CD4-positive, alpha-beta T cell (primary cell): ENCODE measurements at regions of chr17 and their contacts with region 1.

Region 1: DNA sequence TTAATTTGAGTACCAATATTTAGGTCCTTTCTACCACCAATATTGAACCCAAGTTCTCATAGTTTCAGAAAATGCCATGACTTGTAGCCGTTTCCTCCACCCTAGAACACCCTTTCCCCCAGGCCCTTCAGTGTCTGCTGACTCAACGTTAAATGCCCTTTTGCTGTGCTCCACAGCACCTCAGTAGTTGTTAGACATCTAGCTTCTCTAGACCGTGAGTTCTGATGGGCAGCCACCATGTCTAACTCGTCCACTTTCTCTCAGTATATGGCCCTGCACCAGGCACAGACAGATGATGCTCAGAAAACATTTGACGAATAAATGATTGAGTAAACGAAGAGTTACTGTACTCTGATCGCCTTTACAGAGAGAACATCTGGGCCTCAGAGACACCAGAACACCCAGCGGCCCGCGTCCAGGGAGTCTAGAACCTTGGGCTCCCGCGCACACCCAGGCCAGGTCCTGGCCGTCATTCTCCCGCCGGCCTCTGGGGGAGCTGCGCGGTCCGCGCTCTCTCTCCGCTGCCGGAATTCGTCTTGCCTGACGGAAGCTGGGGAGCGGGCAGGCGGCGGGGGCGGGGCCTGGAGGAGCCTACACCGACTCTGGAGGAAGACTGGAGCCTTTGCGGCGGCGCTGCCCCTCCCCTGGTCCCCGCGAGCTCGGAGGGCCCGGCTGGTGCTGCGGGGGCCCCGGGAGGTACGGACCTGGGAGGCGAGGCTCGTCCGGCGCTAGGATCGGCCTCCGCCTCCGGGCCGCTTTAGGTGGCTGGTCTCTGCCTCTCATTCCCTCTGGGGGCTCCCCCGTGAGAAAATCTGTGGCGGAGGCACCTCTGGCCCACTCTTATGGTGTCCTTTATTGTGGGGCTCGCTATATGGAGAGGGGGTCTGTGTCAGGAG is at the start of gene NKIRAS2:
- DNase-seq: peak; percentile 88 to 95 (median 92)
- ATAC-seq: peak; percentile 78
- H3K4me3 ChIP-seq: peak within 1 kb of the TSS; percentile 93
- H3K4me3 Mint-ChIP-seq: peak within 1 kb of the TSS; percentile 100
- H3K27ac ChIP-seq: peak within 1 kb of the TSS; percentile 64 to 80
- H3K27ac Mint-ChIP-seq: peak within 1 kb of the TSS; percentile 98
- H3K4me1 ChIP-seq: peaks cover 56% of the 10 kb centered on the region
- H3K4me1 Mint-ChIP-seq: peaks cover 66% of the 10 kb centered on the region
- H3K27me3 ChIP-seq: no peaks in the 10 kb centered on the region
- H3K27me3 Mint-ChIP-seq: no peaks in the 10 kb centered on the region
- CTCF ChIP-seq: peak; percentile 94
- total RNA-seq, gene NKIRAS2: 12.5 to 12.9 TPM

Region 2: DNA sequence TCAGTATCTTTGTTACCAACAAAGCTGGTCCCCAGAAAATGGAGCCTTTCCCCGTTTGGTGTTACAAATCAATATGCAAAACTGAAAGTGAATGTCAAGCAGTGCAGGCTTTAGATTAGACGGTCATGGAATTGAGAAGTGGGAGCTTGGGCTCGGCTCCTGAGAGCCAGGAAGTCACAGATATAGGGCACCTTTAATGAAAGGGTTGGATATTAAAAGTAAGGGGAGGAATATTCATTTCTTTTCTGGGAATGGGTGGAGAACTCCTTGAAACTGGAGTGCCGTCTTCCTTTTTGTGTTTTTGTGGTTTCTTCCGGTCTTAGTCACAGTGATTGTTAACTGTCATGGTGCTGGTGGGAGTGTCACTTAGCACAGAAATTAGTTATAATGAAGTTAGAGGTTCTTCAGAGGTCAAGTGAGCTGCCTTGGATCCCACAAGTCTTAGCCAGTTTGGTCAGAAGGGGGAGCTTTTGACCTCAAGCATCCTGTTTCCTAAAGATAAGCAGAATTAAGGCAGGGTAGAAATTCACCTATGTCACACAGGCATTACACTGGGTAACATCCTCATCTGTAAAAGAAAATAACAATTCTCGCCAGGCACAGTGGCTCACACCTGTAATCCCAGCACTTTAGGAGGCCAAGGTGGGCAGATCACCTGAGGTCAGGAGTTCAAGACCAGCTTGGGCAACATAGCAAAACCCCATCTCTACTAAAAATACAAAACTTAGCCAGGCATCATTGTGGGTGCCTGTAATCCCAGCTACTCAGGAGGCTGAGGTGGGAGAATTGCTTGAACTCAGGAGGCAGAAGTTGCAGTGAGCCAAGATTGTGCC is 340.6 kb before region 1 on chr17:
- CTCF ChIA-PET with region 1: no interaction called
- POLR2A ChIA-PET with region 1: no interaction called
- intact Hi-C with region 1: no loop called
- DNase-seq: peak in 12 of 14 experiments; percentile 18 to 94 (median 54)
- ATAC-seq: peak; percentile 91
- H3K4me3 ChIP-seq: peak overlapping the region; percentile 38
- H3K4me3 Mint-ChIP-seq: peak overlapping the region; percentile 83
- H3K27ac ChIP-seq: peak overlapping the region; percentile 73 to 74
- H3K27ac Mint-ChIP-seq: peak overlapping the region; percentile 87
- H3K4me1 ChIP-seq: peaks cover 40% of the 10 kb centered on the region
- H3K4me1 Mint-ChIP-seq: peaks cover 20% of the 10 kb centered on the region
- H3K27me3 ChIP-seq: no peaks in the 10 kb centered on the region
- H3K27me3 Mint-ChIP-seq: no peaks in the 10 kb centered on the region
- CTCF ChIP-seq: peak; percentile 28

Region 3: DNA sequence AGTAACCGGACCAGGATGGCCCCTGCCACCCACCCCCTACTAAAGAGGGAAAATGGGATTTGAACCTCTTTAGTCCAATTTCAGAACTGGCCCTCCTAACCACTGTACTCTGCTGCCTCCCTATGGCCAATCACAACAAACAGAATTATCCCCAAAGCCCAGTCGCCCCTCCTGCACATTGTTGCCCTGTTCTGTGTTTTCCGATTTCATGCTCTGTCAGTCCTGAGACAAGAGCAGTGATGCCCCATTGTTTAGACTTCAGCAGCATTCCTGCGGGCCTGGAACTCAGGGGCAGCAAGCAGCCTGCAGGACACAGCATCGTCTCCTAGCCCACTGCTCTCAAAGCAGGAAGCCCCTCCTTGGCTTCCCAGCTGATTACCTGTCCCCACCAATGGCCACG is 134.0 kb before region 1 on chr17:
- CTCF ChIA-PET with region 1: no interaction called
- POLR2A ChIA-PET with region 1: no interaction called
- intact Hi-C with region 1: no loop called
- DNase-seq: peak in 2 of 14 experiments; percentile 16 to 25
- ATAC-seq: no peak
- H3K4me3 ChIP-seq: no peak overlapping the region
- H3K4me3 Mint-ChIP-seq: no peak overlapping the region
- H3K27ac ChIP-seq: no peak overlapping the region
- H3K27ac Mint-ChIP-seq: no peak overlapping the region
- H3K4me1 ChIP-seq: no peaks in the 10 kb centered on the region
- H3K4me1 Mint-ChIP-seq: no peaks in the 10 kb centered on the region
- H3K27me3 ChIP-seq: no peaks in the 10 kb centered on the region
- H3K27me3 Mint-ChIP-seq: no peaks in the 10 kb centered on the region
- CTCF ChIP-seq: peak; percentile 20

Region 4: DNA sequence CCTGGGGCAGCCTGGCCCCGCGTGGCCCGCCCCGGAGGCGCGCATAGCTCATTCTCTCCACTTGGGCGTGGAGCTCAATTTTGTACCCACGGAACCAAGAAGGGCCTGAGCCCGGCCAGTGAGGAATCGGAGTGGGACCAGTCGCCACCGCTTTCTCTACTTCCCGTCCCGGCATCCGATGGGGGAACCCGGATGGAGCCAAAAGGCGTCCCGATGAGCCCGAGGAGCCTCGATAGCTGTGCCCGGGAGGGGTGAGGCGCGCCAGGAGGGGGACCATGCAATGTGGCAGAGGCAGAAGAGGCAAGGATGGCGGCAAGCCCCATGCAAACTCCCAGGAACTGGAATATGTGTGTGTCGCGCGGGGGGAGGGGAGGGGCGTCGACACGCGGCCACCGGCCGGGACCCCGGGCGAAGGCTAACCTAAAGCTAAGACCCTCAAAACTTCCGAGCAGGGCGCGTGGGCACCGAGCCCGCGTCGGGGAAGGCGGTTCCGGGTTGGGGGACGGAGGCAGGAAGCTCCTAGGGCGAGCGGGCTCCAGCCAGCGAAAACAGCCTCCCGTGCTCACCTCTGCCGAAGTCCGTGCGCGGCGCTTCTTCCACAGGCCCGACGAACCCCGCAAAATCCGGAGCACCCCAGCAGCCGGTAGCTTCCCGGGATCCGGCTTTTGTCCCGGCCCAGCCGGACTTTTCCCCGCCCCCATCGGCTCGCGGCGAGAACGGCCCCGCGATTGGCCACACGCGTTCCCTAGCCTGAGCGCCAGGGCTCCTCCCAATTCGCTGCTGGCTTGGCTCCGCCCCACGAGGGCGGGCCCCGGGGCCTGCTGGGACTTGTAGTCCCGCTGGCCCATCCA is 101.2 kb before region 1 on chr17 and contains the start of gene ACLY:
- CTCF ChIA-PET with region 1: no interaction called
- POLR2A ChIA-PET with region 1: interaction called, 9 read pairs
- intact Hi-C with region 1: loop called in 1 of 2 experiments (anchors 5 kb)
- DNase-seq: peak; percentile 87 to 98 (median 94)
- ATAC-seq: peak; percentile 99
- H3K4me3 ChIP-seq: peak within 1 kb of the TSS; percentile 90
- H3K4me3 Mint-ChIP-seq: peak within 1 kb of the TSS; percentile 95
- H3K27ac ChIP-seq: peak within 1 kb of the TSS; percentile 69 to 74
- H3K27ac Mint-ChIP-seq: peak within 1 kb of the TSS; percentile 64
- H3K4me1 ChIP-seq: peaks cover 35% of the 10 kb centered on the region
- H3K4me1 Mint-ChIP-seq: peaks cover 27% of the 10 kb centered on the region
- H3K27me3 ChIP-seq: no peaks in the 10 kb centered on the region
- H3K27me3 Mint-ChIP-seq: no peaks in the 10 kb centered on the region
- CTCF ChIP-seq: no peak
- total RNA-seq, gene ACLY: 25.9 to 28.3 TPM

Region 5: GRCh38 chr17:41966463-41967140 is 53.2 kb before region 1 on chr17 and contains the start of gene CNP:
- CTCF ChIA-PET with region 1: interaction called, 6 read pairs
- POLR2A ChIA-PET with region 1: interaction called, 81 read pairs
- intact Hi-C with region 1: loop called (anchors 2 to 5 kb)
- DNase-seq: peak; percentile 79 to 96 (median 90)
- ATAC-seq: peak; percentile 80
- H3K4me3 ChIP-seq: peak within 1 kb of the TSS; percentile 91
- H3K4me3 Mint-ChIP-seq: peak within 1 kb of the TSS; percentile 85
- H3K27ac ChIP-seq: peak within 1 kb of the TSS; percentile 65 to 74
- H3K27ac Mint-ChIP-seq: peak within 1 kb of the TSS; percentile 94
- H3K4me1 ChIP-seq: peaks cover 41% of the 10 kb centered on the region
- H3K4me1 Mint-ChIP-seq: peaks cover 39% of the 10 kb centered on the region
- H3K27me3 ChIP-seq: no peaks in the 10 kb centered on the region
- H3K27me3 Mint-ChIP-seq: no peaks in the 10 kb centered on the region
- CTCF ChIP-seq: no peak
- total RNA-seq, gene CNP: 19.2 to 23.4 TPM

Region 6: GRCh38 chr17:42120770-42121769 is 101.3 kb after region 1 on chr17 and contains the start of gene KAT2A:
- CTCF ChIA-PET with region 1: interaction called, 4 read pairs
- POLR2A ChIA-PET with region 1: interaction called, 17 read pairs
- intact Hi-C with region 1: no loop called
- DNase-seq: peak; percentile 59 to 89 (median 72)
- ATAC-seq: peak; percentile 88
- H3K4me3 ChIP-seq: peak within 1 kb of the TSS; percentile 48
- H3K4me3 Mint-ChIP-seq: peak within 1 kb of the TSS; percentile 82
- H3K27ac ChIP-seq: no peak within 1 kb of the TSS
- H3K27ac Mint-ChIP-seq: no peak within 1 kb of the TSS
- H3K4me1 ChIP-seq: peaks cover 28% of the 10 kb centered on the region
- H3K4me1 Mint-ChIP-seq: peaks cover 25% of the 10 kb centered on the region
- H3K27me3 ChIP-seq: no peaks in the 10 kb centered on the region
- H3K27me3 Mint-ChIP-seq: no peaks in the 10 kb centered on the region
- CTCF ChIP-seq: no peak
- total RNA-seq, gene KAT2A: 38.5 to 42.4 TPM

Region 7: DNA sequence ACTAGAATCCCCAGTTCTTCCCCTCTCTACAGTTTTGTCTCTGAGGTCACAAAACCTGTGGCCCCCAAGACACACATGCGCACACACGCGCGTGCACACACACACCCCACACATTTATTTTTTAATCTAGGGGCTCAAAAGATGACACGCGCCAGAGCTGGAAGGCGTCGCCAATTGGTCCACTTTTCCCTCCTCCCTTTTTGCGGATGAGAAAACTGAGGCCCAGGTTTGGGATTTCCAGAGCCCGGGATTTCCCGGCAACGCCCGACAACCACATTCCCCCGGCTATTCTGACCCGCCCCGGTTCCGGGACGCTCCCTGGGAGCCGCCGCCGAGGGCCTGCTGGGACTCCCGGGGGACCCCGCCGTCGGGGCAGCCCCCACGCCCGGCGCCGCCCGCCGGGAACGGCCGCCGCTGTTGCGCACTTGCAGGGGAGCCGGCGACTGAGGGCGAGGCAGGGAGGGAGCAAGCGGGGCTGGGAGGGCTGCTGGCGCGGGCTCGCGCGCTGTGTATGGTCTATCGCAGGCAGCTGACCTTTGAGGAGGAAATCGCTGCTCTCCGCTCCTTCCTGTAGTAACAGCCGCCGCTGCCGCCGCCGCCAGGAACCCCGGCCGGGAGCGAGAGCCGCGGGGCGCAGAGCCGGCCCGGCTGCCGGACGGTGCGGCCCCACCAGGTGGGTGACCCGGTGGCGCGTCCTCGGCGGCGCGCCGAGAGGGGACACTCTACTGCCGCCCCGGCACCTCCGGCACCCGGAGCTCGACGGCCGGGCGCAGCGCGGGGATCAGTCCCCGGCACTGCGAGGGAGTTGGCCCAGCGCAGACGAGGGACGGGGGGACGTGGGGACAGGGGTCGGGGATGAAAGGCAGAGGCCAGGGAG is 268.4 kb after region 1 on chr17 and contains the start of gene STAT5A:
- CTCF ChIA-PET with region 1: no interaction called
- POLR2A ChIA-PET with region 1: interaction called, 10 read pairs
- intact Hi-C with region 1: no loop called
- DNase-seq: peak; percentile 60 to 92 (median 76)
- ATAC-seq: peak; percentile 81
- H3K4me3 ChIP-seq: peak within 1 kb of the TSS; percentile 86
- H3K4me3 Mint-ChIP-seq: peak within 1 kb of the TSS; percentile 92
- H3K27ac ChIP-seq: peak within 1 kb of the TSS; percentile 87 to 89
- H3K27ac Mint-ChIP-seq: peak within 1 kb of the TSS; percentile 95
- H3K4me1 ChIP-seq: peaks cover 61% of the 10 kb centered on the region
- H3K4me1 Mint-ChIP-seq: peaks cover 51% of the 10 kb centered on the region
- H3K27me3 ChIP-seq: no peaks in the 10 kb centered on the region
- H3K27me3 Mint-ChIP-seq: no peaks in the 10 kb centered on the region
- CTCF ChIP-seq: no peak
- total RNA-seq, gene STAT5A: 141 to 150 TPM